ENCODE measurements at regions of chrX and their contacts with region 1.

Region 1: GRCh38 chrX:47560831-47561652 is at the start of gene ARAF:
- DNase-seq: peak; percentile 96
- ATAC-seq: peak; percentile 91
- H3K4me3 Mint-ChIP-seq: peak within 1 kb of the TSS; percentile 89
- H3K27ac Mint-ChIP-seq: peak within 1 kb of the TSS; percentile 94
- H3K4me1 Mint-ChIP-seq: peaks cover 37% of the 10 kb centered on the region
- H3K27me3 Mint-ChIP-seq: no peaks in the 10 kb centered on the region
- total RNA-seq, gene ARAF: 58.8 to 59.2 TPM

Region 2: DNA sequence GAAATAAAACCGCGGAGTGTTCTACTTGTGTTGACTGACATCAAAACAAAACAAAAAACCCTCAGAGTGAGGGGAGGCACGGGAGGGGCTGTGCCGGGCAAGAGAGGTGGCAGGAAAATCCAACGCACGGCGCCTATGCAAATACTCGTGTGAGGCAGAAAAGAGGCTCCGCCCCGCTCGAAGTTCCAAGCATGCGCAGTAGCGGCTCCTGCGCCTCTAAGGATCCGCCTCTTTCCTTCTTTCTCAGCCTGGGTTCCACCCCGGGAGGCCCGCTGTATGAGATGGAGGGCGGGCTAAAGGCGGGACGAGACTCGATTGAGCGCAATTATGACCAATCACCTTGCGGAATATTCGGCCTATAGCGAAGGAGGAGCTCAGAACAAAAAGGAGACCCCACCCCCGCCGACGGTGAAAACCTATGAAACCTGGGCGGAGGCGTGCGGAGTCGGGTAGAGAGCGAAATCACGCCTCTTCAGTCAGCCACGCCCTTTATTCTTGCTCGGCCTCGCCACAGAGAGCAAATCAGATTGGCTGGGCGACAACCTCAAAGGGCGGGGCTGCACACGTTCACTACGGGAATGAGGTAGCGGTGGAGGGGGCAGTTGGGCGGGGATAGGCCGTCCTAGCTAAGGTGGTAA is 343.3 kb before region 1 on chrX:
- CTCF ChIA-PET with region 1: no interaction called
- POLR2A ChIA-PET with region 1: interaction called, 3 read pairs
- intact Hi-C with region 1: loop called in 1 of 2 experiments (anchors 1 kb)
- DNase-seq: peak; percentile 96
- ATAC-seq: peak; percentile 87
- H3K4me3 Mint-ChIP-seq: peak overlapping the region; percentile 92
- H3K27ac Mint-ChIP-seq: peak overlapping the region; percentile 99
- H3K4me1 Mint-ChIP-seq: peaks cover 35% of the 10 kb centered on the region
- H3K27me3 Mint-ChIP-seq: no peaks in the 10 kb centered on the region

Region 3: DNA sequence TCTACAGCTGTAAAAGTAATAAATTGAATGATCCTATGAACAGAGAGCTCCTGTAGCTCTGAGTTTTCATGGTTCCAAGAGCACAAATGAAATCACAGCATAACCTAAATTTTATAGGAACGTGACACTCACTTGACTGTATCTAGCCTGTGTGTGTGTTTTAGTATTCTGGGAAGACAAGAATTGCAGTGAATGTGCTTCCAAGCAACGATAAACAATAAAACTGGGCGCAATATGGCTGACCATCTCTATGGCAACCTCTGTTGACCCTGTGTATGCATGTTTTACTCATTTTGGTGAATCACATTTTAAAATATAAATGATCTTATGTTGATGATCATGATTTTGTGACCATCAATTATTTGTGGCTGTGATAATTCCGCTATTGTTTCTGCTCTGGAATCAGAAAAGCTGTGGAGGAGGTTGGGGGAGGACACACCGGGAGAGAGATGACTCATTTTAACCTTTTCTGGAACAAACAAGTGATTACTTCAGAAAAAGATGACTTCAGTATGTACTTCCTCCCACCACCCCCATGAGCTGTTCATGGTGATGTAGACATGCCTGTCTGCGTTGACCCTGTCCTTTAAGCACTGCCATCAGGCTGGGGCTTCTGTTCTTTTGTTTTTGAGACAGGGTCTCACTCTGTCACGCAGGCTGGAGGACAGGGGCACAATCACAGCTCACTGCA is 296.4 kb before region 1 on chrX:
- CTCF ChIA-PET with region 1: no interaction called
- POLR2A ChIA-PET with region 1: no interaction called
- intact Hi-C with region 1: no loop called
- DNase-seq: peak; percentile 39
- ATAC-seq: peak; percentile 87
- H3K4me3 Mint-ChIP-seq: no peak overlapping the region
- H3K27ac Mint-ChIP-seq: peak overlapping the region; percentile 55
- H3K4me1 Mint-ChIP-seq: peaks cover 12% of the 10 kb centered on the region
- H3K27me3 Mint-ChIP-seq: no peaks in the 10 kb centered on the region

Region 4: GRCh38 chrX:47540754-47541538 is 20.1 kb before region 1 on chrX:
- CTCF ChIA-PET with region 1: no interaction called
- POLR2A ChIA-PET with region 1: no interaction called
- intact Hi-C with region 1: no loop called
- DNase-seq: peak; percentile 17
- ATAC-seq: peak; percentile 49
- H3K4me3 Mint-ChIP-seq: no peak overlapping the region
- H3K27ac Mint-ChIP-seq: no peak overlapping the region
- H3K4me1 Mint-ChIP-seq: no peaks in the 10 kb centered on the region
- H3K27me3 Mint-ChIP-seq: no peaks in the 10 kb centered on the region

Region 5: DNA sequence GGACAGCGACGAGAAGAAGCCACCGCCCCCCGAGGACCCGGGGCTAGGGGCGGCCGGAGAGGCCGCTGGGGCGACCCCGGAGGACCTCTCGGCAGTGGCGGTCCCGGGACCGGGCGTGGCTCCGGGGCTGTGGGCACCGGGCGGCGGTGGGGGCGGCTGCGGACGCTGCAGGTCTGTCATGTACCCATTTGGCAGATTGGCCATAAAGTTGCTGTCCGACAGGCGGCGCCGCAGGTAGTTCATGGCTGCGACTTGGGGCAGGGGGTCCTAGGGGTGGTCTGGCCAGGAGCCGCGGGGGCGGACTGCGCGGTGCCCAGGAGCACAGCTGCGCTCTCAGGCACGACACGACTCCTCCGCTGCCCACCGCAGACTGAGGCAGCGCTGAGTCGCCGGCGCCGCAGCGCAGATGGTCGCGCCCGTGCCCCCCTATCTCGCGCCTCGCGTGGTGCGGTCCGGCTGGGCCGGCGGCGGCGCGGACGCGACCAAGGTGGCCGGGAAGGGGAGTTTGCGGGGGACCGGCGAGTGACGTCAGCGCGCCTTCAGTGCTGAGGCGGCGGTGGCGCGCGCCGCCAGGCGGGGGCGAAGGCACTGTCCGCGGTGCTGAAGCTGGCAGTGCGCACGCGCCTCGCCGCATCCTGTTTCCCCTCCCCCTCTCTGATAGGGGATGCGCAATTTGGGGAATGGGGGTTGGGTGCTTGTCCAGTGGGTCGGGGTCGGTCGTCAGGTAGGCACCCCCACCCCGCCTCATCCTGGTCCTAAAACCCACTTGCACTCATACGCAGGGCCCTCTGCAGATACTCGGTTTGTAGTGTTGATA is 58.7 kb after region 1 on chrX and contains the start of gene SYN1:
- CTCF ChIA-PET with region 1: no interaction called
- POLR2A ChIA-PET with region 1: no interaction called
- intact Hi-C with region 1: loop called in 1 of 2 experiments (anchors 1 kb)
- DNase-seq: peak; percentile 89
- ATAC-seq: peak; percentile 78
- H3K4me3 Mint-ChIP-seq: peak within 1 kb of the TSS; percentile 45
- H3K27ac Mint-ChIP-seq: no peak within 1 kb of the TSS
- H3K4me1 Mint-ChIP-seq: peaks cover 13% of the 10 kb centered on the region
- H3K27me3 Mint-ChIP-seq: no peaks in the 10 kb centered on the region
- total RNA-seq, gene SYN1: 0.82 to 0.98 TPM

Region 6: GRCh38 chrX:47658684-47659515 is 97.9 kb after region 1 on chrX and contains the start of gene UXT:
- CTCF ChIA-PET with region 1: no interaction called
- POLR2A ChIA-PET with region 1: interaction called, 3 read pairs
- intact Hi-C with region 1: loop called (anchors 1 to 5 kb)
- DNase-seq: peak; percentile 96
- ATAC-seq: peak; percentile 83
- H3K4me3 Mint-ChIP-seq: peak within 1 kb of the TSS; percentile 86
- H3K27ac Mint-ChIP-seq: peak within 1 kb of the TSS; percentile 94
- H3K4me1 Mint-ChIP-seq: peaks cover 52% of the 10 kb centered on the region
- H3K27me3 Mint-ChIP-seq: no peaks in the 10 kb centered on the region
- total RNA-seq, gene UXT: 195 to 210 TPM

Region 7: DNA sequence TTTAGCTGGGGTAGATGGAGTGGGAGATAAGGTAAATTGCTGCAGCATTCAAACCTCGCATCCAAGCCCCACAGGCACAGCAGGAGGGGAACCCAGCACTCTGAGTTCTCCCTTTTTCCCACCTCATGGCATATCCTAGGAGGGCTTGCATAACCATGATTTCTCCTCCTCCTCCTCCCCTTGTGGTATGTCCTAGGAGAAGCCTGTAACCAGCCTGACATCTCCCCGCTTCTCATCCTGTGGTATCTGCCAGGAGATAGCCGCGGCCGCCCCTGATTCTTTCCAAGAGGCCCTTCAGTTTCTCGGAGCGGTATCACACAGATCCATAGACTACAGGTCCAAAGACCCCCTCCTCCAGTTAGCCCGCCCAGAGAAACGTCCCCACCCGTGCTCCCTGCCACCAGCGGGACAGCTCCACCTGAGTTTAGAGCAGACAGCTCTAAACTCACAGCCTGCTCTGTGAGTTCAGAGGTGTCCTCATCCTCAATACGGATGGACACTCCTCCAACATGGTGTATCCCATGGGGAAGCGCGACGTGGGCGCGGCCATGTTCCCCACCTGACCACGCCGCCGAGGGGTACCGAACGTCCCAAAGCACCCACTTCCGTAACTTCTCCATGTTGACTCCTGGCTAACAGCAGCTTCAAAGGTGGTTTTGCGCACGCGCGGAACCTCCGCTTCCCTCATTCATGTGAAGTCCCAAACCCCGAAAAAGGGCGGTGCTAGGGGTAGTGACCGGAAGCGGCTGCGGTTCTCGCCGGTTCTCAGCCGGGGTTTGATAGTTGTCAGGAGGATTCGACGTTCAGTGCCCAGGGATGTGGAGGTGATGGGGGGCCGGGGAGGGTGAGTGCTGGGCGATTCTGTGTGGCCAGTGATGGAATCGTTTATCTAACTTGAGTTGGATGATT is 275.4 kb after region 1 on chrX and contains the start of gene ZNF81:
- CTCF ChIA-PET with region 1: no interaction called
- POLR2A ChIA-PET with region 1: no interaction called
- intact Hi-C with region 1: loop called in 1 of 2 experiments (anchors 1 kb)
- DNase-seq: peak; percentile 93
- ATAC-seq: peak; percentile 92
- H3K4me3 Mint-ChIP-seq: peak within 1 kb of the TSS; percentile 95
- H3K27ac Mint-ChIP-seq: peak within 1 kb of the TSS; percentile 97
- H3K4me1 Mint-ChIP-seq: peaks cover 23% of the 10 kb centered on the region
- H3K27me3 Mint-ChIP-seq: no peaks in the 10 kb centered on the region
- total RNA-seq, gene ZNF81: 5.3 to 6.4 TPM

Measured in activated CD4-positive, alpha-beta T cell treated with anti-CD3 and anti-CD28 coated beads for 36 hours (primary cell).